ENCODE measurements at regions of chr13 and their contacts with region 1.

Region 1: DNA sequence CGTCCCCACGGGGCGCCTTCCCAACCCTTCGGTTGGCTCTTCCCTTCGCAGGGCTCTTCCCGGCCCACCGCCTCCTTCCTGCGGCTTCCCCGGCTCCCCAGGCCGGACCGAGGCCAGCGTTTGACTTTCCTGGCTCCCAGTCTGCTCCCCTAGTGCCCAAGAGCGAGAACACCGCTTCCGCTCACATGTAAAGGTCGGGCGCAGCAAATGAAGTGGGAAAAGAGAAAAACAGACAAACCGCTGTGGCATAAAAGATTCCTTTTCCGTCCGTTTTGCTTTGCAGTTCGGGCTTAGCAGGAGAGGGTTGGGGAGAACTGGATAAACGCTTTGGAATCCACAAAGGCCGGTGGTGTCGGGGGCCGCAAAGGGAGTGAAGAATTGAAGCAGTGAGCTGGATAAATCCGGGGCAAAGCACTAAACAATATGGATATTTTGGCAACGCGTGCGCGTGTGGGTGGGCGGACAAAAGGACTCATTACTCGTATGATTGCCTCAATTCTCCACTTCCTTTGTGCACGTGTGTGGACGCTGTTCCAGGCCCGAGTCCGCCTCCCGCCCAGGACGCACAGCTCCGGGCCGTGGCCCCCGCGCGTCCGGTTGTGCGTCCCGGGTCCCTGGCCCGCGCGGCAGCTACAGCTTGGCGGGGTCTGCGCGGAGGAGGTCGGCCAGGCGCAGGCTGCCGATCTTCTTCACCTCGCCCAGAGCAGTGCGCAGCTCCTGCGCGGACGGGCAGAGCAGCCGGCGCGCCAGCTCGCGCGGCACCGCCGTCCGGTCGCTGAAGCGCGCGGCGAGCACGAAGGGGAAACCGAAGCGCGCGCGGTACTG is 8.6 kb upstream of the CDX2 start:
- DNase-seq: peak; percentile 54
- ATAC-seq: no peak
- H3K4me3 ChIP-seq: no peak overlapping the region
- H3K4me3 Mint-ChIP-seq: peak overlapping the region; percentile 64
- H3K27ac ChIP-seq: no peak overlapping the region
- H3K27ac Mint-ChIP-seq: no peak overlapping the region
- H3K4me1 ChIP-seq: peaks cover 46 to 51% of the 10 kb centered on the region in 2 donors
- H3K4me1 Mint-ChIP-seq: peaks cover 39% of the 10 kb centered on the region
- H3K27me3 ChIP-seq: peaks cover 0 to 86% (median 66%) of the 10 kb centered on the region in 4 experiments
- H3K27me3 Mint-ChIP-seq: peaks cover 79% of the 10 kb centered on the region
- CTCF ChIP-seq: no peak

Region 2: GRCh38 chr13:27593267-27593666 is 384.4 kb before region 1 on chr13:
- CTCF ChIA-PET with region 1: no interaction called
- POLR2A ChIA-PET with region 1: no interaction called
- intact Hi-C with region 1: no loop called
- DNase-seq: no peak
- ATAC-seq: no peak
- H3K4me3 ChIP-seq: no peak overlapping the region
- H3K4me3 Mint-ChIP-seq: no peak overlapping the region
- H3K27ac ChIP-seq: no peak overlapping the region
- H3K27ac Mint-ChIP-seq: no peak overlapping the region
- H3K4me1 ChIP-seq: peaks cover 40 to 43% of the 10 kb centered on the region in 2 donors
- H3K4me1 Mint-ChIP-seq: peaks cover 1% of the 10 kb centered on the region
- H3K27me3 ChIP-seq: no peaks in the 10 kb centered on the region
- H3K27me3 Mint-ChIP-seq: no peaks in the 10 kb centered on the region
- CTCF ChIP-seq: no peak

Region 3: GRCh38 chr13:27868641-27869435 is 108.8 kb before region 1 on chr13:
- CTCF ChIA-PET with region 1: interaction called, 27 read pairs
- POLR2A ChIA-PET with region 1: no interaction called
- intact Hi-C with region 1: no loop called
- DNase-seq: peak; percentile 13
- ATAC-seq: no peak
- H3K4me3 ChIP-seq: no peak overlapping the region
- H3K4me3 Mint-ChIP-seq: no peak overlapping the region
- H3K27ac ChIP-seq: no peak overlapping the region
- H3K27ac Mint-ChIP-seq: no peak overlapping the region
- H3K4me1 ChIP-seq: no peaks in the 10 kb centered on the region
- H3K4me1 Mint-ChIP-seq: no peaks in the 10 kb centered on the region
- H3K27me3 ChIP-seq: peaks cover 0 to 12% (median 7%) of the 10 kb centered on the region in 4 experiments
- H3K27me3 Mint-ChIP-seq: peaks cover 31% of the 10 kb centered on the region
- CTCF ChIP-seq: peak; percentile 73

Region 4: DNA sequence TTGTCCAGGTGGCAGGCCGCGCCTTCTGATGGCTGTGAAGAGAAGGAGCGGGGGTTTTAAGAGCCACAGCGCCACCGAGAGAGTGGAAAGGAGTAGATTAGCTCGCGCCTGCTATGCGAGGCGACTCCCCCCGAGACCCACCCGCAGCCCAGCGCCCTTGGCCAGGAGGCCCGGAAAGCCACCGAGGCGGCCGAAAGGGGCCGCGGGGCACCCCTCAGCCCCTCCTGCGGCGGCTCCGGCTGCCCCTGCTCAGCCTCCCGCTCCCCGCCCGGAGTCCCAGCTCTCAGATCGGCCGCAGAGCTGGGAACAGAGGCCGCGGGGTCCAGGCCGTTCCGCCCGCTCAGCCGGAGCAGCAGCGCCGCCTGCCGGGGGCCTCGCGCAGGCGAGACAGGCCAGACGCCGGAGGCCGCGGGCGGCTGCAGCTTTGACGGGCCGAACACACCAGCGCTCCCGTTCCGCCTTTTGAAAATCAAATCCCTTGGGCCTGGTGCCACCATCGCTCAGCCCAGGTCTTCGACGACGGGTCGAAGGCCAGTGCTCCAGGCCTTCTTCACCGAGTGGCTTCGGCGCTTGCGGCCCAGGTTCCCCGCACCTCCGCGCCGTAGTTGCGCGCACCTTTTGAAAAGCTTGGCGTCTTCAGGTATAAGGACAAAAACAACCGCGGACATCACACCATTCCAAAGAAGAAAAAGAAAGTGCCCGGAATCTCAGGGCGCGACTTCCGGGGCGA is 23.8 kb before region 1 on chr13:
- CTCF ChIA-PET with region 1: interaction called, 11 read pairs
- POLR2A ChIA-PET with region 1: no interaction called
- intact Hi-C with region 1: no loop called
- DNase-seq: peak; percentile 81
- ATAC-seq: peak; percentile 88
- H3K4me3 ChIP-seq: peak overlapping the region in 4 of 5 experiments; percentile 31 to 53 (median 43)
- H3K4me3 Mint-ChIP-seq: peak overlapping the region; percentile 86
- H3K27ac ChIP-seq: no peak overlapping the region
- H3K27ac Mint-ChIP-seq: no peak overlapping the region
- H3K4me1 ChIP-seq: peaks cover 21 to 25% of the 10 kb centered on the region in 2 donors
- H3K4me1 Mint-ChIP-seq: peaks cover 15% of the 10 kb centered on the region
- H3K27me3 ChIP-seq: peaks cover 0 to 58% (median 44%) of the 10 kb centered on the region in 4 experiments
- H3K27me3 Mint-ChIP-seq: peaks cover 74% of the 10 kb centered on the region
- CTCF ChIP-seq: peak; percentile 86

Region 5: DNA sequence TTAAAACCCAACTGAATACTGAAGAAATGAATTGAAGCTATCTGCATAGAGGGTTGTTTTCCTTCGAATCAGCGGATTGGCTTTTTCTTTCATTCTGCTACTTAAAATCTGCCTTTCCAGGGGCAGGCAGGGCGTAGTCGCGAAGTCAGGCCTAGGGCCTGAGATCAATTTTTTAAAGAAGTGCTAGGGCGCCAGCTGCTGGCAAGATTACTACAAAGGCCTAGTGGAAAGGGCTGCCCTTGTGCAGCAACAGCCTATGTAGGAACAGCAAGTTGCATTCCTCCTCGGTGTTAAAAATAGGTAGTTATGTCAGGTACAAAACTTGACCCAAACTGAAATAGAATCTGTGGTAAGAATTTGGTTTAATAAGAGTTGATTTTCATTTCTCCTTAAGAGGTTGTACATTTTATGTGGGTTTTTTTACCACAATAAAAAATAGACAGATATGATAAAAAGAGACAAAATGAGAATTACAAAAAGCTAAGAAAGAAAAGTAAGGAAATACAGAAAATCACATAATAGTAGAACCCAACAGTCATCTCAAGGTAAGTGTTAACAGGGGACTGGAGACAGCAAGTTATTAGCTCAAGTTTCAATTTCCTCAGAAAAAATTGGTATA is 20.3 kb after region 1 on chr13:
- CTCF ChIA-PET with region 1: interaction called, 36 read pairs
- POLR2A ChIA-PET with region 1: no interaction called
- intact Hi-C with region 1: no loop called
- DNase-seq: peak; percentile 41
- ATAC-seq: peak; percentile 67
- H3K4me3 ChIP-seq: no peak overlapping the region
- H3K4me3 Mint-ChIP-seq: no peak overlapping the region
- H3K27ac ChIP-seq: peak overlapping the region in 1 of 2 donors; percentile 25
- H3K27ac Mint-ChIP-seq: no peak overlapping the region
- H3K4me1 ChIP-seq: no peaks in the 10 kb centered on the region
- H3K4me1 Mint-ChIP-seq: peaks cover 3% of the 10 kb centered on the region
- H3K27me3 ChIP-seq: no peaks in the 10 kb centered on the region
- H3K27me3 Mint-ChIP-seq: no peaks in the 10 kb centered on the region
- CTCF ChIP-seq: peak; percentile 26

Measured in B cell (primary cell).